ENCODE measurements at regions of chr12 and their contacts with region 1.

Region 1: DNA sequence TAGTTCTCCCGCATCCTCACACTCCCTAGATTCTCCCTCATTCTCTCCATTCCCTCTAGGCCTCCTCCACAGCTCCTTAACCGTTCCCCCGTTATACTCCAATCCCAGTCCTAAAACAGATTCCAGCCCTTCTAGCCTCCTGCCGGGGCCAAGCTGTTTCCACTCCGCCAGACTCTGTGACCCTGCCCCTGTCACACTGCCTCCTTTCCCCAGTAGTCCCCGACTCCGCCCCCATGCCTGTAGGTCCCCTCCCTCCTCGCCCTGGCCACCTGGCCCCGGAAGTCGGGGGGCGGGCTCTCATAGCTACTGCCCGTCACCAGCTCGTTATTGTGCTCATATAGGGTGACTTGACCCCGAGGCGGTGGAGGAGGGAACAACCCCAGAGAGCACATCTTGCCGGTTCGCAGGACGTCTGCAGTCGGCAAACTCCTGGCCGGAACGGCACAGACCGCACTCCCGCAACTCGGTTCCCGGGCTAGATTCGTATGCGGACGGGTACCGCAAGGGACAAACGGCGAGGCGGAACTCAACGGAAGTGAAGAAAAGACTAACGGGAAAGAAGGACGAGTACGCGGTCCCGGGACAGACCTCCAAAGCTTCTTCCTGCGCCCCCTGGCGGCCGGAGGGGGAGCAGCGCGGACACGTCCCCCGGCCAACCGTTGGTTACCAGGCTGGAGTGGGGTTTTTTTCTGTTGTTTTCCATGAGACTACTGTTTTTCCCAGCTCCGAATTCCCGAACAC is at the start of gene AAAS:
- DNase-seq: peak; percentile 96
- ATAC-seq: peak; percentile 85
- H3K4me3 Mint-ChIP-seq: peak within 1 kb of the TSS; percentile 96
- H3K27ac Mint-ChIP-seq: peak within 1 kb of the TSS; percentile 99
- H3K4me1 Mint-ChIP-seq: peaks cover 26% of the 10 kb centered on the region
- H3K27me3 Mint-ChIP-seq: peaks cover 37% of the 10 kb centered on the region
- CTCF ChIP-seq: peak; percentile 98
- total RNA-seq, gene AAAS: 95.8 to 104 TPM (median 98.9 TPM) in 3 replicates

Region 2: DNA sequence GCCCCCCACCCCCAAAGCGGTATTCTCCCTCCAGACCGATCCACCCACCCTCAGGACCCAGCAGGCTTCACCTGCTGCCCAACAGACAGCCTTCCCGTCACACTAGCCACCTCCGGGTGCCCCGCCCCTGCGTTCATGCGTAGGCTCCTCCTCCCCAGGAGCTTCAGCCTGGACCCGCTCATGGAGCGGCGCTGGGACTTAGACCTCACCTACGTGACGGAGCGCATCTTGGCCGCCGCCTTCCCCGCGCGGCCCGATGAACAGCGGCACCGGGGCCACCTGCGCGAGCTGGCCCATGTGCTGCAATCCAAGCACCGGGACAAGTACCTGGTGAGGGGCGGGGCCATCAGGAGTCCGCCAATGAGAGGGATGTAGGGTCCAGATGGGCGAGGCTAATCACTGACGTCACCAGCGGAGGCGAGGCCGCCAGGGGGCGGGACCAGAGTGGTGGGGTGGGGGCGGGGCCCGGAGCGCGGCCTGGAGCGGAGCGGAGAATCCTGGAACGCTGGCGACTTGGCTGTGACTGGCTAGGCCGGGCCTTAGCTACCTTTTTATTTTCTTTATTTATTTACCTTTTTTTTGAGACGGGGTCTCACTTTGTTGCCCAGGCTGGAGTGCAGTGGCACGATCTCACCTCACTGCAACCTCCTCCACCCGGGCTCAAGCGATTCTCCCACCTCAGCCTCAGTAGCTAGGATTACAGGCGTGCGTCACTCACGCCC is 267.0 kb before region 1 on chr12:
- CTCF ChIA-PET with region 1: interaction called, 11 read pairs
- POLR2A ChIA-PET with region 1: no interaction called
- DNase-seq: peak; percentile 97
- ATAC-seq: peak; percentile 75
- H3K4me3 Mint-ChIP-seq: peak overlapping the region; percentile 94
- H3K27ac Mint-ChIP-seq: peak overlapping the region; percentile 98
- H3K4me1 Mint-ChIP-seq: peaks cover 31% of the 10 kb centered on the region
- H3K27me3 Mint-ChIP-seq: peaks cover 40% of the 10 kb centered on the region
- CTCF ChIP-seq: no peak

Region 3: DNA sequence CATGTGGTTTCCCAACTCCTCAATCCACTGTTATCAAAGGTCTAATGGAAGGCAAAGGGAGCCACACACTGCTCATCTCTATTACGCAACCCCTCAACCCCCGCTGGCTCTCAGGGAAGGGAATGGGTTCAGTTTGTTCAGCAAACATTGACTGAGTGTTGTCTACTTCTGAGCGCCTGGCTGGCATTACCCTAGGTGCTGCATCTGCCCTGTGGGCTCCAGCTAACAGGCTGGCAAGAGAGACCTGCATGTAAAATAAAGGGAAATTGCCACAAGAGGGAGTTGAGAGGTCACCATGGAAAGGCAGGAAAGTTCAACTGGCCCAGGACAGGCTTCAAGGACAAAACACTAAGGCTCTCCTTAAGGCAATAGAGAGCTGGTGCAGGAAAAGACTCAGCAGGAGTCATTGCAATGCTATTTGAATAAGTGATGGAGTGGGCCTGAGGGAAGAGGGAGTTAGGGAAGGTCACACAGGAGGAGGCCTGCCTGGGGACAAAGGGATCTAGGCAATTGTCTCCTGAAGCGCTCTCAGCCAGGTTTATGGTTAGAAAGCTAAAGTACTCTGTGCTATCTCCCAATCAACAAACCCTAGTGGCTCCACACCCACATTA is 146.3 kb before region 1 on chr12:
- CTCF ChIA-PET with region 1: interaction called, 22 read pairs
- POLR2A ChIA-PET with region 1: no interaction called
- DNase-seq: peak; percentile 63
- ATAC-seq: peak; percentile 97
- H3K4me3 Mint-ChIP-seq: no peak overlapping the region
- H3K27ac Mint-ChIP-seq: no peak overlapping the region
- H3K4me1 Mint-ChIP-seq: peaks cover 23% of the 10 kb centered on the region
- H3K27me3 Mint-ChIP-seq: peaks cover 100% of the 10 kb centered on the region
- CTCF ChIP-seq: no peak

Region 4: DNA sequence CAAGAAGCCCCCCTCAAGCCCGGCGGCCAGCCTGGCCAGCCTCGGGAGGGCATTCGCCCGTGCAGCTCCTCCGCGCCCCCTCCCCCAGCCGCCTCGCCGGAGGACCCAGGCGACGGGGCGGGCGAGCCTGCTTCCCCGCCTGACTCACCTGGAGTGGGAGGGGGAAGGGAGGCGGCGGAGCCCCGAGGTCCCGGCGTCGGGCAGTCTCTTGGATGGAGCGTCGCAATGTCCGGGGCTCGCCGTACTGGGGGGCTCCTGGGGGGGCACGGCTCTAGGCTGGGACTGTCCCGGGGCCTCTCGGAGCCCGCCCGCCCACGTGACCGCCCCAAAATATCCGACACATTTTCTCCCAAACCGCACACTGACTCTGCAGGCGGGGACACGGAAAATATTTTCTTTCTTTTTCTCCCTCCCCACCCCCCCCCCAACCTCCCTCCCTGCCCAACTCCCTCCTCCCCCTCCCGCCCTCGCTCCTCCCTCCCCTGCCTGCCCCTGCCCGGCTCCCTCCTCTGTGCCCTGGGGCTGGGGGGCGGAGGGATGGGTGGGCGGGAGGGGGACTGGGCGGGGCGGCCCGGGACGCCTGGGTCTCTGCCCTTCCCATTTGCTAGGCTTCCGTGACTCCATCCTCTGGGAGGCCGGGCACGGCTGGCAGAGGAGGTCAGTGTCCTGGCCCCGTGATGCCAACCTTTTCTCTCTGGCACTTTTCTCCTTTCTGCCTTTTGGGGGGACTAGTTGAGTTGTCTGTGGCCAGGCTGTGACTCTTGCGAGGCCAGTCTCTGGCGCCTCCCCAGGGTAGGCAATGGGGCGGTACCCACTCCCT is 89.2 kb before region 1 on chr12 and contains the start of gene RARG:
- CTCF ChIA-PET with region 1: interaction called, 18 read pairs
- POLR2A ChIA-PET with region 1: no interaction called
- DNase-seq: peak; percentile 57
- ATAC-seq: peak; percentile 43
- H3K4me3 Mint-ChIP-seq: peak within 1 kb of the TSS; percentile 82
- H3K27ac Mint-ChIP-seq: peak within 1 kb of the TSS; percentile 88
- H3K4me1 Mint-ChIP-seq: peaks cover 77% of the 10 kb centered on the region
- H3K27me3 Mint-ChIP-seq: peaks cover 5% of the 10 kb centered on the region; the same call in 1 of the 2 replicates
- CTCF ChIP-seq: no peak
- total RNA-seq, gene RARG: 68.1 to 77.2 TPM (median 69.7 TPM) in 3 replicates

Region 5: GRCh38 chr12:53302903-53303302 is 18.3 kb before region 1 on chr12:
- CTCF ChIA-PET with region 1: interaction called, 66 read pairs
- POLR2A ChIA-PET with region 1: interaction called, 8 read pairs
- DNase-seq: no peak
- ATAC-seq: no peak
- H3K4me3 Mint-ChIP-seq: no peak overlapping the region; the same call in 1 of the 2 replicates
- H3K27ac Mint-ChIP-seq: no peak overlapping the region
- H3K4me1 Mint-ChIP-seq: peaks cover 18% of the 10 kb centered on the region
- H3K27me3 Mint-ChIP-seq: no peaks in the 10 kb centered on the region
- CTCF ChIP-seq: no peak

Region 6: DNA sequence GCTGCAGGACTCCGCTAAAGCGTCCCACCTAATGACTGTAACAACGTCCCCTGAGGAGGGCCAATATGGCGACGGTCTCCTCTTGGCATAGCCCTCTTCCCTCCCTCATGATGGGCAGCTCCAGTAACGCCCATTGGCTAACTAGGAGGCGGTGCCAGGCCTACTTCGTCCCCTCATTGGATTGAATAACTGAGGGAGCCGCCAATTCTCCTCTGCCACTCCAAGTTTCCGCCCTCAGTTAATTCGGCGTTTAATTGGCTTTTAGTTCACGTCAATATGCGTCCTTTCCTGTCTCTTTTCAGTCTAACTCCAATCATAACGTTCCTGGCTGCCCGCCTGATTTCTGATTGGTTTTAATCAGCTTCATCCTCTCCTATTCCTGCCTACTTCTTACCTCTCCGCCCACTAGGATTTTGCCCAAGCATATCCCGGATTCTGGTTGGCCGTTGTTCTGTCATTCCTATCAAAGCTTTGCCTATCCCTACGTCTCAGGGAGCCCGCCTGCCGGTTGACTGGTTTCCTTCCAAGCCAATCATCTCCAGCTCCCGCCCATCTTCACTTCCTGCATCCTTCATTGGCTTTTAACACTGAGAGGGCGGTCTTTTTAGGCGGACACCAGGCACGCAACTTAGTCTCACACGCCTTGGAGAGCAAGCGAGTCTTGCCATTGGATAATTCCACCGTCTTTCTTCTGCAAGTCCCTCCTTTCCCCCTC is 58.3 kb after region 1 on chr12:
- CTCF ChIA-PET with region 1: interaction called, 39 read pairs
- POLR2A ChIA-PET with region 1: interaction called, 11 read pairs
- DNase-seq: peak; percentile 95
- ATAC-seq: peak; percentile 87
- H3K4me3 Mint-ChIP-seq: no peak overlapping the region
- H3K27ac Mint-ChIP-seq: no peak overlapping the region
- H3K4me1 Mint-ChIP-seq: peaks cover 27% of the 10 kb centered on the region
- H3K27me3 Mint-ChIP-seq: peaks cover 3% of the 10 kb centered on the region; the same call in 1 of the 2 replicates
- CTCF ChIP-seq: no peak

Region 7: GRCh38 chr12:53481957-53482586 is 160.8 kb after region 1 on chr12:
- CTCF ChIA-PET with region 1: interaction called, 23 read pairs
- POLR2A ChIA-PET with region 1: no interaction called
- DNase-seq: peak; percentile 19
- ATAC-seq: peak; percentile 63
- H3K4me3 Mint-ChIP-seq: no peak overlapping the region
- H3K27ac Mint-ChIP-seq: peak overlapping the region; percentile 86
- H3K4me1 Mint-ChIP-seq: peaks cover 17% of the 10 kb centered on the region
- H3K27me3 Mint-ChIP-seq: no peaks in the 10 kb centered on the region
- CTCF ChIP-seq: peak; percentile 13; the same call in 1 of the 2 replicates